ENCODE measurements at regions of chr1 and their contacts with region 1.

Region 1: DNA sequence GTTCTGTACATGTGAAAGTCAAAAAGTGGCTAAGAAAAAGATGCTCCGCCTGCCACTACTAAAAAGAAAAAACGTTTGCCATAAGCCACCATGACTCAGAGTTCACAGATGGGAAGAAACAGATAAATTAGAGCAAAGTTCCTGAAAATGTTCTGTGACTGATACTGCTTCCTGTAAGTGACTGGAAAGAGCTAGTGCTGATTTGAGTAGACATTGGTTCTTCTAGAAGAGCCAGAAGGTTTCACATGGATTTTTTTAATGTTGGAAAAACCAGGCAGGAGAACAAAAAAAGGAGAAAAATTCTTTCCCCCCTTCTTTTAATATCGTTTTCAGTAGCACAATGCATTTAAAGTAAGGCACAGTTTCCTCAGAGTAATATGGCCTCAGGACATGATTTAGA is 221.4 kb downstream of the HLX start:
- DNase-seq: peak in 1 of 9 experiments; percentile 7
- ATAC-seq: no peak
- H3K4me3 ChIP-seq: no peak overlapping the region
- H3K4me3 Mint-ChIP-seq: no peak overlapping the region
- H3K27ac ChIP-seq: no peak overlapping the region
- H3K27ac Mint-ChIP-seq: no peak overlapping the region
- H3K4me1 ChIP-seq: no peaks in the 10 kb centered on the region
- H3K4me1 Mint-ChIP-seq: no peaks in the 10 kb centered on the region
- H3K27me3 ChIP-seq: no peaks in the 10 kb centered on the region
- H3K27me3 Mint-ChIP-seq: peaks cover 6% of the 10 kb centered on the region
- CTCF ChIP-seq: no peak

Region 2: DNA sequence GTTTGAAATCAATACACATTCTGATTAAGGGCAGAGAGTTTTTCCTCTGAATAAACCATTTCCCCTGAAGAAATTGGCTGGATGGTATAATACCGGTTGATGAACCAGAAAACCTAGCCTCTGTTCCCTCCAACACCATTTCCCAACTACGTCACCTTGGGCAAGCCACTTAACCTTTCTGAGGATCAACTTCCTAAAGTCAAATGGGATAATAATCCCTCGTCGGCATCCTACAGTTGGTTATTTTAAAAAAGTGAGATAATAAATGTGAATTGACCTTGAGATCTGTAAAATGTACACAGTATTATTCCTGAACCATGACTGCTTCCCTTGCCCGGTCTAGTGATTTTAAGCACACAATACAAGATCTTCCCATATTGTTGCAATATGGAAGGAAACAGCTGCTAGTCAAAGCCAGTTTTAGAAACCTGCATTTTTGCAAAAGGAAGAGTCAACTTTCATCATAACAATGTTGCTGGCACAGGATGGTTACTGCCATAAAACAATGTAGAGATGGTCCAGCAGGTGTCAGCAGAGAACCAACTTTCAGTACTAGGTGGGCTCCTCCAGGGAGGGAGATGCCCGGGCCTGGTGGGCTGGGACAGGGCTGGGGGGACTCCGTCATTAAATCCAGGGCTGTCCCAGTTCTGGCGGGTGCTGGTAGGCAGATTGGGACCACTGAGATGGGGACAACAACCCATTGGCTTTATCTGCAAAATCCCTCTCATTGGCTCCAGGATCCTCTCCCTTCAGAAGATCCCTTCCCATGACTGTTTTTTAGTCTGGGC is 226.5 kb before region 1 on chr1:
- CTCF ChIA-PET with region 1: no interaction called
- POLR2A ChIA-PET with region 1: no interaction called
- intact Hi-C with region 1: no loop called
- DNase-seq: peak in 2 of 9 experiments; percentile 18 to 25
- ATAC-seq: no peak
- H3K4me3 ChIP-seq: no peak overlapping the region
- H3K4me3 Mint-ChIP-seq: no peak overlapping the region
- H3K27ac ChIP-seq: no peak overlapping the region
- H3K27ac Mint-ChIP-seq: no peak overlapping the region
- H3K4me1 ChIP-seq: peaks cover 12% of the 10 kb centered on the region
- H3K4me1 Mint-ChIP-seq: peaks cover 19% of the 10 kb centered on the region
- H3K27me3 ChIP-seq: peaks cover 9 to 10% of the 10 kb centered on the region in 2 experiments
- H3K27me3 Mint-ChIP-seq: peaks cover 72% of the 10 kb centered on the region
- CTCF ChIP-seq: no peak

Region 3: DNA sequence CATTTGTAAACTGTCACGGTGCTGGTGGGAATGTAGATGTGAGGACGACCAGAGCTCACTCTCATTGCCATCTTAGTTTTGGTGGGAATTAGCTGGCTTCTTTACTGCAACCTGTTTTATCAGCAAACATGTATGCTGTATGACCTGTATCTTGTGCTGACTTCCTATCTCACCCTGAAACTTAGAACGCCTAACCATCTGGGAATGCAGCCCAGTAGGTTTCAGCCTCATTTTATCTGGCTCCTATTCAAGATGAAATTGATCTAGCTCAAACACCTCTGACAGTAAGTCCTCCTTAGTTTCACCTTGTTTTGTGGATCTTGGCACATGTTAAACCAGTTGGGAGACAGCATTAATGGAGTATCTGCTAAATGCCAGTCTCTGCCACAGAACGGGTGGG is 46.7 kb before region 1 on chr1:
- CTCF ChIA-PET with region 1: no interaction called
- POLR2A ChIA-PET with region 1: no interaction called
- intact Hi-C with region 1: loop called in 1 of 2 experiments (anchors 1 kb)
- DNase-seq: no peak
- ATAC-seq: no peak
- H3K4me3 ChIP-seq: no peak overlapping the region
- H3K4me3 Mint-ChIP-seq: no peak overlapping the region
- H3K27ac ChIP-seq: no peak overlapping the region
- H3K27ac Mint-ChIP-seq: no peak overlapping the region
- H3K4me1 ChIP-seq: no peaks in the 10 kb centered on the region
- H3K4me1 Mint-ChIP-seq: no peaks in the 10 kb centered on the region
- H3K27me3 ChIP-seq: no peaks in the 10 kb centered on the region
- H3K27me3 Mint-ChIP-seq: no peaks in the 10 kb centered on the region
- CTCF ChIP-seq: no peak

Measured in CD8-positive, alpha-beta T cell (primary cell).